ENCODE measurements at regions of chr10 and their contacts with region 1.

Region 1: GRCh38 chr10:13987446-13987845 is 343.3 kb downstream of the FRMD4A start:
- DNase-seq: peak; percentile 73
- H3K4me3 ChIP-seq: no peak overlapping the region
- H3K27ac ChIP-seq: peak overlapping the region; percentile 71
- H3K4me1 ChIP-seq: peaks cover 76% of the 10 kb centered on the region
- H3K27me3 ChIP-seq: no peaks in the 10 kb centered on the region
- CTCF ChIP-seq: no peak
- POLR2A ChIP-seq: no peak

Region 2: DNA sequence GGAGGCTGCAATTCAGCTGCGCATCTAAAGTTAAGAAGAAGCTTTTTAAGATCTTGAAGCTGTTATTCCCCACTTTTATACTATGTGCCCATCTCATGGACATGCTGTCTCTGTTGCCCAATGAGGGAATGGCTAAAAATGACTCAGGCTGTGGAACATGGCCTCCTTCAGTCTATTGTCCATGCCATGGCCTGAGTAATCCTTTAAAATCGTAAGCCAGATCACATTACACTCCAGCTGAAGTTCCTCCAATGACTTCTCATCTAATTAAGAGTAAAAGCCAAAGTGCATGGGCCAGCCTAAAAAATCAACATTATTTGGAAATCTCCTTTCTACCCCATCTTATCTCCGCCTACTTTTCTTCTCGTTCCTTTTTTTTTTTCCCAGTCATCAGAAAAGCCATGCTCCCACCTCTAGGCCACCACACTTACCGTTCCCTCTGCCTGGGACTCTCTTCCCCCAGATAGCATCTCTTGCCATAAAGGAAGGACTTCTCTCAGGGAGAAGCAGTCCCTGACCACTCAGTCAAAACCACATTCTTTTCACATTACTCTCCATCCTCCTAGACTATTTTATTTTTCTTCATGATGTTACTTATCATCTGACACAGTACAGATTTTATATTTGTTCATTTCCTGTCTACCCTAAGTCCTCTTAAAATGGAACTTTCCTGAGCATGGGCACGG is 63.3 kb before region 1 on chr10:
- CTCF ChIA-PET with region 1: interaction called, 4 read pairs
- POLR2A ChIA-PET with region 1: no interaction called
- dilution Hi-C with region 1: no loop called
- intact Hi-C with region 1: loop called (anchors 2 kb)
- DNase-seq: peak; percentile 74
- H3K4me3 ChIP-seq: no peak overlapping the region
- H3K27ac ChIP-seq: peak overlapping the region; percentile 87
- H3K4me1 ChIP-seq: peaks cover 24% of the 10 kb centered on the region
- H3K27me3 ChIP-seq: no peaks in the 10 kb centered on the region
- CTCF ChIP-seq: no peak
- POLR2A ChIP-seq: peak; percentile 45

Region 3: DNA sequence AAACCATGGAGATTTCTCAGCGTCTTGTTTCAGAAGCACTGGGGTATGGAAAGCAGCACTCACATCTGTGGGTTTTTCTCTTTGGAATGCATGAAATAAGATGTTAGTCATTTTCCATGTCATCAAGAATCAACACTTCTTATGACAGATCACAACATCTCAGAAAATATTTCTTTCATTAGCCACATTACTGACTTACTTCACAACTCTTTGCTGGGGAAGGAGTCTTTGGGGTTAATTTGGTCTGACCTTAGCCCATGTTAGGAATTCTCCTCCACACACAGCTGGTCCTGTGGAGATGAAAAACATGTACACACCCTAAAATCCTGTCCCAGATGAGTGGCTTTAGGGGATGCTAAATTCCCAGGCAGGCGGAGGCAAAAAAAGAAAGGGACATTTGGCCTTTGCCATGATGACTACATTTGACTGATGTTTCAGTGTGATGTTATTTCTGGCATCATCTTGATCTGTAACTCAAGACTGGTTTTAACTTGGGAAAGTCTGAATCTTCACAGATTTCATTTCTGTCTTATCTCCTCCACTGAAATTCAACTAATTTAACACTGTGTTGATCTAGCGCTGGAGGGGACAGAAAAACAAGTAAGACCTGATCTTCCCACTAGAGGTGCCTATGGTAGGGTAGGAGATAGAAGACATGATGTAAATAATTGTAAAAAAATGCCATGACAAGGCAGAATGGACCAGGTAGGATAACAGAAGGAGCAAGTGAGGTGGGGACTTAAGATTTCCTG is 37.4 kb before region 1 on chr10:
- CTCF ChIA-PET with region 1: interaction called, 3 read pairs
- POLR2A ChIA-PET with region 1: no interaction called
- dilution Hi-C with region 1: no loop called
- intact Hi-C with region 1: loop called (anchors 1 kb)
- DNase-seq: peak; percentile 22
- H3K4me3 ChIP-seq: no peak overlapping the region
- H3K27ac ChIP-seq: no peak overlapping the region
- H3K4me1 ChIP-seq: peaks cover 33% of the 10 kb centered on the region
- H3K27me3 ChIP-seq: no peaks in the 10 kb centered on the region
- CTCF ChIP-seq: no peak
- POLR2A ChIP-seq: no peak

Region 4: GRCh38 chr10:14009371-14010100 is 22.1 kb after region 1 on chr10:
- CTCF ChIA-PET with region 1: no interaction called
- POLR2A ChIA-PET with region 1: no interaction called
- dilution Hi-C with region 1: no loop called
- intact Hi-C with region 1: loop called (anchors 1 kb)
- DNase-seq: peak; percentile 47
- H3K4me3 ChIP-seq: peak overlapping the region; percentile 1 to 79 (median 26)
- H3K27ac ChIP-seq: peak overlapping the region; percentile 93
- H3K4me1 ChIP-seq: peaks cover 39% of the 10 kb centered on the region
- H3K27me3 ChIP-seq: no peaks in the 10 kb centered on the region
- CTCF ChIP-seq: no peak
- POLR2A ChIP-seq: no peak

Region 5: DNA sequence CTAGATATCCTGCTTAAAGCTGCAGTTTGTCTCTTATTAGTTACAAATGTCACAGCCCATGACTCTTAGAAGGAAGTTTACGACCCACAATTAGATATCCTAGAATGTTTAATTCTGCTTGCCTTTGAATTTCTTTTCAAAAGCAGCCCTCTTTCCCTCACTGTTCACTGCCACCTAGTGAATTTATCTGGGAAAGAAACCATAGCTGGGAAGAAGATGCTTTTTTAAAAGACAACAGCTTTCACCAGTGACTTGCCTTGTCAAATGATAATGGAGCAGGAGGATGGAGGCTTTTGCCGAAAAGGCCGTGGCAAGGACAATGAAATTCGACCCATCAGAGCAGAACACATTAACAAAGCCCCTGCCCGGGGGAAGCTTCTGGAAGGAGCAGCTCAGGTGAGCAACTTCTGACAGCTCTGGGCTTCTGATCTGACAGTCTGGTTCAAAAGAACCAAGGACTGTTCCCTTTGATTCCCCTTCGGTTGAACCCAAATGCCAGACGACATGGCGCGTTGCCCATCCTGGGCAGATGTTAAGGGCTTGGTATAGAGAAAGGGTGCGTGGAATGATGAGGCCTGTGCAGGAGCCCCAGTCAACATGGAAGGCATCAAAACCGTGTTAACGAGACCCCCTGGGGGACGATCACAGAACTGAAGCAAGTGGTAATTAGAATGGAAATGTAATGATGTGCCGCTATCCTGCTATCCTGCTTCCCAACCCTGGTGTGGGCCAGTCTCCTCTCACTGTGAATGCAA is 106.5 kb after region 1 on chr10:
- CTCF ChIA-PET with region 1: interaction called, 15 read pairs
- POLR2A ChIA-PET with region 1: no interaction called
- dilution Hi-C with region 1: no loop called
- intact Hi-C with region 1: loop called (anchors 1 kb)
- DNase-seq: peak; percentile 68
- H3K4me3 ChIP-seq: no peak overlapping the region
- H3K27ac ChIP-seq: no peak overlapping the region
- H3K4me1 ChIP-seq: peaks cover 6% of the 10 kb centered on the region
- H3K27me3 ChIP-seq: no peaks in the 10 kb centered on the region
- CTCF ChIP-seq: peak; percentile 41 to 45
- POLR2A ChIP-seq: no peak

Measured in endothelial cell of umbilical vein (primary cell).